Activated CD8-positive, alpha-beta T cell treated with anti-CD3 and anti-CD28 coated beads for 36 hours (primary cell): ENCODE measurements at regions of chr14 and their contacts with region 1.

Region 1: DNA sequence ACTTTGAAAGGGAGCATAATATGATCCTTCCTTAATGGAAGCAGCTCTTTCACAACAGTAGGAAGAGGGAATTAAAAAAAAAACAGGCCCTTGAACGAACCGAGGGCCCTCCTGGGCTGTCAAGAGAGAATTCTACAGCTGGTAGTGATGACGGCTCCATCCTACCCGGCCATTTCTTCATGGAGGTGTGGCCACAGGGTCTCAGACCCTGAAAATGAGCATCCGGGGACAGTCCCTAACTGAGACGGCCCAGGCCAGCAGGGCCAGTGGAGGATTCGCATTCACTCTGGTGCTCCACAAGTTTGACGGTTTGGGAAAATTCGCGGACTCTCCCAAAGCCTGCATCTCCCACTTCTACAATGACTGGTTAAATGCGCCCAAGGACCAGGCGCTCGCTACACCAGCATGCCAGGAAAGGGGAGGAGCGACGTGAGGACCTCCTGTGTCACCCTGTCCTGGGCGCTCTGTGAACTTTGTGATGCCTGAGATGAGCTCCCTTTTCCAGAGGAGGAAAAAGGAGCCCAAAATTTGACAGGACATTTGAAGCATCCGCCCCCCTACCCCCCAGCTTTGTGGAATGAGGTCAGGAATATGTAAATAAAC is 66.8 kb downstream of the BCL11B start:
- DNase-seq: peak; percentile 55
- ATAC-seq: peak; percentile 38
- H3K4me3 Mint-ChIP-seq: peak overlapping the region; percentile 54
- H3K27ac Mint-ChIP-seq: peak overlapping the region; percentile 98
- H3K4me1 Mint-ChIP-seq: peaks cover 100% of the 10 kb centered on the region
- H3K27me3 Mint-ChIP-seq: no peaks in the 10 kb centered on the region
- CTCF ChIP-seq: no peak

Region 2: GRCh38 chr14:98647754-98648153 is 557.4 kb before region 1 on chr14:
- CTCF ChIA-PET with region 1: no interaction called
- POLR2A ChIA-PET with region 1: no interaction called
- intact Hi-C with region 1: no loop called
- DNase-seq: no peak
- ATAC-seq: no peak
- H3K4me3 Mint-ChIP-seq: no peak overlapping the region
- H3K27ac Mint-ChIP-seq: no peak overlapping the region
- H3K4me1 Mint-ChIP-seq: peaks cover 2% of the 10 kb centered on the region
- H3K27me3 Mint-ChIP-seq: no peaks in the 10 kb centered on the region
- CTCF ChIP-seq: no peak

Region 3: DNA sequence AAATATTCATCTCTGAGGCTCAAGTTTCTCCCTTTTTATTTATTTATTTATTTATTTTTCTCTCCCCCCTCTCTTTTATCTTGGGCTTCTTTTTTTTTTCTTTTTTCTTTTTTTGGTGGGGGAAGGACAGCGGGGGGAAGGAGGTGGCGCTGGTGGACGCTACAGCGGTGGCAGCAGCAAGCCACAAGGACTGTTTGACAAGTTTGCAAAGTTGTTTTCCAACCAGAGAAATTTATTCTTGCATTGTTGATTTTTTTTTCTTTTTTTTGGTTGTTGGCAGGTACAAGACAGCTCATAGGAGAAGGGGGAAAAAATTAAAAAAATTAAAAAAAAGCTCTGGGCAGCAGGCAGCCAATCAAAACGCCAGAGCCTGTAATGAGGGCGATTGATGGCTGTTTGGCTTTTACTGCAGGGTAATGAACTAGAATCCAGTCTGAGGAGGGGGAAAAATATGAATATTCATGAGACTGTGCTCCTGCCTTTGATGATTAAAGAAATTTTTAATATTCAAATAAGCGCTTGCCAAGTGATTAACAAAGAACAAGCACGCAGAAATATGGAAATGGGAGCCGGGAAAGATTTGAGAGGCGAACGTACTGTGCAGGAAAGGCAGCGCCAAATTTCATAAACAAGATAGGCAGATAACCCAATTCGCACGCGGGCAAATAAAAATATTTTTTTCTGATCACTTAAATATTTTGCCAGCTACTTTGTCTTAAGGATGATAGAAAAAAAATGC is 30.6 kb after region 1 on chr14:
- CTCF ChIA-PET with region 1: interaction called, 11 read pairs
- POLR2A ChIA-PET with region 1: interaction called, 23 read pairs
- intact Hi-C with region 1: no loop called
- DNase-seq: no peak
- ATAC-seq: no peak
- H3K4me3 Mint-ChIP-seq: peak overlapping the region; percentile 79
- H3K27ac Mint-ChIP-seq: peak overlapping the region; percentile 99
- H3K4me1 Mint-ChIP-seq: peaks cover 91% of the 10 kb centered on the region
- H3K27me3 Mint-ChIP-seq: no peaks in the 10 kb centered on the region
- CTCF ChIP-seq: no peak

Region 4: DNA sequence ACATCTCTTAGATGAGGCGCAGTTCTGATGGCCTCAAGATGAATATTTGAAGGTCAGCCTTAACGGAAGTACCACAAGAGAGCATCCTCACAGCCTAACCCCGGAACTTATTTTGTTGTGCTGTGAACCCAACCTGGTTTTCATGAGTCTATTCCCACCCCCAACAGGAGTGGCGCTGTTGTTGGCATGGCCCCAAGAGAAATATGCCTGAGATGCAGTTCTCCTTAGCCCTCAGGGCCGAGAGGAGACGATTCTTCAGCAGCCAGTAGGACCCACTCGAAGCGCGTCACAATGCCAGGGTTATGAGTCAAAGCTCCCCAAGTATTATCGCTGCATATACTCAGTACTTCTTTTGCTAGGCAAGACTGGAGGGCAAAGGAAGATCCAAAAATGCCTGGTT is 91.3 kb after region 1 on chr14:
- CTCF ChIA-PET with region 1: no interaction called
- POLR2A ChIA-PET with region 1: no interaction called
- intact Hi-C with region 1: no loop called
- DNase-seq: no peak
- ATAC-seq: no peak
- H3K4me3 Mint-ChIP-seq: no peak overlapping the region
- H3K27ac Mint-ChIP-seq: no peak overlapping the region
- H3K4me1 Mint-ChIP-seq: no peaks in the 10 kb centered on the region
- H3K27me3 Mint-ChIP-seq: no peaks in the 10 kb centered on the region
- CTCF ChIP-seq: no peak

Region 5: DNA sequence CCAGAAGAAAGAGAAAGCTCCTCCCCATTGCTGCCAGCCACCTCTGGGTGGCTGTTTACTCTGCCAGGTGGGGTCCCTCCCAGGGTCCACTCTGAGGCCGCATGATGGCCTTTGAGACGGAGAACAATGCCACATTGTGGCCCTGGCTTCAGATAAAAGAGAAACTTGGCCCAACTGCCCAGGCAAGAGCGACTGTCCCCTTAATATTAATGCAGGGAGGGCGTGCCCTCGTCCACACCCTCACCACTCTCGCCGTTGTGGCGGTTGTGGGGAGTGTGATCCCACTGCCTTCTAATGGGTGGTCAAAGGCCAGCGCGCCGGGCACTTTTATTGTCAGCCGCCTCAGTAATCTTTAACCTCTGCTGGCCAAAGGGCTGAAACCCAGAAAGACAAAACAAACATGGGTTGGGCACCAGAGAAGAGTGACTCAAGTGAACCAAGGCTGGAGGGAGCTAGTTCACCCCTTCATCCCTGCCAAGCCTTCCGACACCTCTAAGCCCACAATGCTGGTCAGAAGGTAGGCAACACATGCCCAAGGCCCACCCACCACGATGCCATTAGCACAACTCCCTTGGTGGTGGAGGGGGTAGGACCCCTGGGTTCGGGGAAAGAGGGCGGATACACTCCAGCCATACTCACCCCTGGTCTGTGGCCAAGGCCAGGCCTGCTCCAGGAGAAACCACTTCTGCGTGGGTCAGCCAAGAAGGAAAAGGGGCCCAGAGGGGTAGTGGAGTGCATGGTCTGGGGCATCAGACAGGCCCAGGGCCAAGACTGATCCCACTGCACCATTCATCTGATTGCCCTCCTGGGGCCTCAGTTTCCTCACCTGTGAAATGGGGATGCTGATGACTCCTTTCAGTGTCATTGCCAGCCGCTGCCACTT is 111.3 kb after region 1 on chr14:
- CTCF ChIA-PET with region 1: no interaction called
- POLR2A ChIA-PET with region 1: no interaction called
- intact Hi-C with region 1: no loop called
- DNase-seq: no peak
- ATAC-seq: no peak
- H3K4me3 Mint-ChIP-seq: no peak overlapping the region
- H3K27ac Mint-ChIP-seq: no peak overlapping the region
- H3K4me1 Mint-ChIP-seq: peaks cover 9% of the 10 kb centered on the region
- H3K27me3 Mint-ChIP-seq: no peaks in the 10 kb centered on the region
- CTCF ChIP-seq: no peak